Caco-2 (cell line): ENCODE measurements at regions of chr6 and their contacts with region 1.

Region 1: DNA sequence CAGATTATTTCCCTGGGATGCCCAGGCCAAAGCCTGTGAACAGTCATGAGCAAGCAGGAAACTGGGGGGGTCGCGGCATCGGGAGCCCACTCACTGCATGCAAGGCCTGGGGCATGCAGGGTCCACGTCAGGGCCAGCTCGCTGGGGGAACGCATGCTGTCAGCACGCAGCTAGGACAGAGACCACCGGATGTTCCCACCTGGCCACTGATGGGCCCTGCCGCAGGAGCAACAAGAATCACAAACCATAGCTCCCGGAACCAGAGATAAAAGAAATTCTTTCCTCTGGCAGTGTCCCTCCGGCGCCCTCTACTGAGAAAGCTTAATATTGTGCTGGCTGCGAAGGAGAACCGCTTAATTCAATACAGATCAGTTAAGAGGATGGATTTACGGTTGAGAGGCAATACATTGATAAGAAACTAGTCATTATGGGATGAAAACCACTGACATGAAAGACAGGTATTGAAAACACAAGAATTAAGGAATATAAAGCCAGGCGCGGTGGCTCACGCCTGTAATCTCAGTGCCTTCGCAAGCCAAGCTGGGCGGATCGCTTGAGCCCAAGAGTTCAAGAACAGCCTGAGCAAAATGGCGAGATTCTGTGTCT is 32.6 kb downstream of the C6orf15 start:
- DNase-seq: peak; percentile 71 to 78
- H3K4me3 ChIP-seq: no peak overlapping the region
- H3K4me3 Mint-ChIP-seq: no peak overlapping the region
- H3K27ac Mint-ChIP-seq: no peak overlapping the region
- H3K4me1 ChIP-seq: 0 out of 2 replicates have a peak, but pooled peaks cover 5% of the 10 kb centered on the region
- H3K4me1 Mint-ChIP-seq: peaks cover 8% of the 10 kb centered on the region
- H3K27me3 ChIP-seq: no peaks in the 10 kb centered on the region
- H3K27me3 Mint-ChIP-seq: peaks cover 5% of the 10 kb centered on the region
- CTCF ChIP-seq: peak; percentile 63 to 82

Region 2: DNA sequence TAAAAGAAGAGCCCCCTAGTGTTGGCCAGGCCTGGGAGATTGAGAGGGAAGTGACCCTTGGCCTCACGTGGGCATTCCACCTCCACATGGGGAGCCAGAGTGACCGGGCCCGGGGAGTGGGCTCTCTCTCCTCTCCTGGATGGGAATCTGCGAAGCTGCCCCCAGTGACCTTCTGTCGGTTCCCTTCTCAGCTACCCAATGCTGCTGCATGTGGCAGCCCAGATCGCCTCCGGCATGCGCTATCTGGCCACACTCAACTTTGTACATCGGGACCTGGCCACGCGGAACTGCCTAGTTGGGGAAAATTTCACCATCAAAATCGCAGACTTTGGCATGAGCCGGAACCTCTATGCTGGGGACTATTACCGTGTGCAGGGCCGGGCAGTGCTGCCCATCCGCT is 181.9 kb before region 1 on chr6:
- CTCF ChIA-PET with region 1: no interaction called
- POLR2A ChIA-PET with region 1: no interaction called
- intact Hi-C with region 1: no loop called
- DNase-seq: no peak
- H3K4me3 ChIP-seq: no peak overlapping the region
- H3K4me3 Mint-ChIP-seq: no peak overlapping the region
- H3K27ac Mint-ChIP-seq: no peak overlapping the region
- H3K4me1 ChIP-seq: no peaks in the 10 kb centered on the region
- H3K4me1 Mint-ChIP-seq: peaks cover 8% of the 10 kb centered on the region
- H3K27me3 ChIP-seq: no peaks in the 10 kb centered on the region
- H3K27me3 Mint-ChIP-seq: no peaks in the 10 kb centered on the region
- CTCF ChIP-seq: no peak

Region 3: GRCh38 chr6:30907758-30908591 is 171.8 kb before region 1 on chr6 and contains the start of gene GTF2H4:
- CTCF ChIA-PET with region 1: interaction called, 51 read pairs
- POLR2A ChIA-PET with region 1: no interaction called
- intact Hi-C with region 1: no loop called
- DNase-seq: peak; percentile 95 to 98
- H3K4me3 ChIP-seq: peak within 1 kb of the TSS; percentile 76
- H3K4me3 Mint-ChIP-seq: peak within 1 kb of the TSS; percentile 90
- H3K27ac Mint-ChIP-seq: peak within 1 kb of the TSS; percentile 60
- H3K4me1 ChIP-seq: peaks cover 9% of the 10 kb centered on the region; the same call in 1 of the 2 replicates
- H3K4me1 Mint-ChIP-seq: peaks cover 9% of the 10 kb centered on the region
- H3K27me3 ChIP-seq: no peaks in the 10 kb centered on the region
- H3K27me3 Mint-ChIP-seq: no peaks in the 10 kb centered on the region
- CTCF ChIP-seq: no peak
- total RNA-seq, gene GTF2H4: 40.6 and 43.6 TPM in 2 replicates

Region 4: DNA sequence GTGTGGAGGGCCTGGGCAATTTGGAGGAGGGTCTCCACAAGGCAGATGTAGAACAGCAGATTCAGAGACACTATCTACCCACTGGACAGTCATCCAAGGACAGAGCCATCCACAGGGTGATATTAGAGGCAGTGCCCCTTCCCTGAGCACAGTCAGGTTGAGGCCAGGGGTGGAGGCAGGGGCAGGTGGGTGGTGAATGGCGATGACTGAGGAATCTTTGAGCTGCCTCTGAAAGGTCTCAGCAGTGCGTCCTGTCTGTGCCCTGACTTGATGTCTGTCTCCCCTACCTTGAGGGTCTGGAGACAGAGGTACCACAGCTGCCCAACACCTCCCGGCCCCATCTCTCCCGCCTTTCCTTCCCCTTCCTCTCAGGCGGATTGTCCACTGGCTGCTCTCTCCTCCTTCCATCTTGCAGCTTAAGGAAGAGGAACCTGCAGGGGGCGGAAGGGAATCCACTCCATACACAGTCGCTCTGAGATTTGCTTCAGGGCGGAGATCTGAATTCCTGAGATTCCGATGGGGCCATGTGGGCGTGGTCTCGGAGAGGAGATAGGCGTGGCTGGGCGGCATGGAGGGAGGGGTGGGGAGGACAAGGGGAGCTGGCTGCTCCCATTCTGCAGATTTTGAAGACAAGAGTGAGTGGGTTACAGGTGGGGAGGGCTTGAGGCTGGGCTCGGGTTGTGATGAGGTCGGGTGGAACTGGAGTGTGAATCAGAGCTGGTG is 137.3 kb before region 1 on chr6:
- CTCF ChIA-PET with region 1: interaction called, 12 read pairs
- POLR2A ChIA-PET with region 1: no interaction called
- intact Hi-C with region 1: no loop called
- DNase-seq: peak; percentile 91 to 94
- H3K4me3 ChIP-seq: no peak overlapping the region
- H3K4me3 Mint-ChIP-seq: peak overlapping the region; percentile 55
- H3K27ac Mint-ChIP-seq: peak overlapping the region; percentile 80
- H3K4me1 ChIP-seq: peaks cover 23% of the 10 kb centered on the region
- H3K4me1 Mint-ChIP-seq: peaks cover 23% of the 10 kb centered on the region
- H3K27me3 ChIP-seq: no peaks in the 10 kb centered on the region
- H3K27me3 Mint-ChIP-seq: no peaks in the 10 kb centered on the region
- CTCF ChIP-seq: peak; percentile 52 to 67

Region 5: DNA sequence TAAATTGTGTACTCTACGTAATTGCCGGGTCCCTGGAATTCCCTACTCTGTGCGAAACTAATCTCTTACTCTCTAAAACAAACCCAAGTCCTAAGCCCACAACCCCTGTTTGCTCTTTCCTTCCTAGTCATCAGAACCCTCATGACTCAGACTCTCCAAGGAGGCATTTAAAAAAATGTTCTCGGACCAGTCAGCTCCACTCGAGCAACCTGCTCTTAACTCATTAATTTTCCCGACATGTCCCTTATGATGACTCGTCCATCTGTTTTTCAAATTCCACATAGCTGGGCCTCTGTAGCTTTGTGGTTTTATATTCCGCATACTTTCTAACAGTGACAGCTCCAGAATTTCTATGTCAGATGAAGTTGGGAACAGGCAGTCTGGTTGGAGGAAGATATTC is 72.1 kb before region 1 on chr6:
- CTCF ChIA-PET with region 1: no interaction called
- POLR2A ChIA-PET with region 1: no interaction called
- intact Hi-C with region 1: no loop called
- DNase-seq: peak; percentile 37
- H3K4me3 ChIP-seq: no peak overlapping the region
- H3K4me3 Mint-ChIP-seq: peak overlapping the region; percentile 20
- H3K27ac Mint-ChIP-seq: no peak overlapping the region
- H3K4me1 ChIP-seq: peaks cover 12% of the 10 kb centered on the region
- H3K4me1 Mint-ChIP-seq: peaks cover 19% of the 10 kb centered on the region
- H3K27me3 ChIP-seq: no peaks in the 10 kb centered on the region
- H3K27me3 Mint-ChIP-seq: no peaks in the 10 kb centered on the region
- CTCF ChIP-seq: no peak

Region 6: GRCh38 chr6:31092769-31093505 is 13.2 kb after region 1 on chr6:
- CTCF ChIA-PET with region 1: interaction called, 10 read pairs
- POLR2A ChIA-PET with region 1: no interaction called
- intact Hi-C with region 1: no loop called
- DNase-seq: peak in 1 of 2 experiments; percentile 24
- H3K4me3 ChIP-seq: no peak overlapping the region
- H3K4me3 Mint-ChIP-seq: no peak overlapping the region
- H3K27ac Mint-ChIP-seq: no peak overlapping the region
- H3K4me1 ChIP-seq: peaks cover 13% of the 10 kb centered on the region
- H3K4me1 Mint-ChIP-seq: peaks cover 14% of the 10 kb centered on the region
- H3K27me3 ChIP-seq: no peaks in the 10 kb centered on the region
- H3K27me3 Mint-ChIP-seq: no peaks in the 10 kb centered on the region
- CTCF ChIP-seq: no peak

Region 7: GRCh38 chr6:31246050-31246521 is 166.3 kb after region 1 on chr6:
- CTCF ChIA-PET with region 1: no interaction called
- POLR2A ChIA-PET with region 1: no interaction called
- intact Hi-C with region 1: no loop called
- DNase-seq: peak; percentile 33 to 44
- H3K4me3 ChIP-seq: no peak overlapping the region
- H3K4me3 Mint-ChIP-seq: no peak overlapping the region
- H3K27ac Mint-ChIP-seq: no peak overlapping the region
- H3K4me1 ChIP-seq: no peaks in the 10 kb centered on the region
- H3K4me1 Mint-ChIP-seq: no peaks in the 10 kb centered on the region
- H3K27me3 ChIP-seq: no peaks in the 10 kb centered on the region
- H3K27me3 Mint-ChIP-seq: peaks cover 15% of the 10 kb centered on the region
- CTCF ChIP-seq: no peak